ENCODE measurements at regions of chr4 and their contacts with region 1.

Region 1: DNA sequence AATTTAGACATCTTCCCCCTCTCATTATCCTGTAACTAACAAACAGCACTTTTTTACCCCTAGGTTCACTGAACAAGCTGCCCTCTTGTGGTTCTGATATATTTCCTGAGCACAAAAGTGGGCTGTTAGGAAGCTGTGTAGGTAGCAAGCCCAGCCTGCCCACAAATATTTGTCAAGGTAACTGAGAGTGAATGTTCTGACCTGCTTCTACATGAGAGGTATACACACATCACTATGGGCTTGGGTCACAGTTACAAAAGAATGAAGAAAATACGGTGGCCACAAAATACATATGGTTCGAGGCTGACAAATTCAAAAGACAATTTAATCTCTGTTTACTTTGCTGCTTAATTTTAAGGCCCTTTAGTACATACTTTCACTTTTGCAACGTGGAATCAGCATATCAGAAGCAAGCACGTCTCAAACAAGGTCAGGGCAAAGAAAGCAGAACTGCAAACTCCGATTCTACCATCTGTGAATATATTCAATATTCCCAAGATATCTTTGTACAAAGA is 78.7 kb downstream of the RBM47 start:
- DNase-seq: peak; percentile 37
- H3K4me3 Mint-ChIP-seq: peak overlapping the region; percentile 84
- H3K27ac Mint-ChIP-seq: peak overlapping the region; percentile 81
- H3K4me1 Mint-ChIP-seq: peaks cover 65% of the 10 kb centered on the region
- H3K27me3 Mint-ChIP-seq: no peaks in the 10 kb centered on the region

Region 2: GRCh38 chr4:40432504-40432903 is 118.5 kb before region 1 on chr4:
- intact Hi-C with region 1: loop called (anchors 2 kb)
- DNase-seq: no peak
- H3K4me3 Mint-ChIP-seq: no peak overlapping the region
- H3K27ac Mint-ChIP-seq: peak overlapping the region; percentile 50
- H3K4me1 Mint-ChIP-seq: peaks cover 34% of the 10 kb centered on the region
- H3K27me3 Mint-ChIP-seq: peaks cover 2% of the 10 kb centered on the region

Region 3: GRCh38 chr4:40576631-40577480 is 25.9 kb after region 1 on chr4:
- intact Hi-C with region 1: loop called (anchors 2 kb)
- DNase-seq: no peak
- H3K4me3 Mint-ChIP-seq: peak overlapping the region; percentile 35
- H3K27ac Mint-ChIP-seq: peak overlapping the region; percentile 74
- H3K4me1 Mint-ChIP-seq: peaks cover 57% of the 10 kb centered on the region
- H3K27me3 Mint-ChIP-seq: peaks cover 2% of the 10 kb centered on the region

Measured in activated T-helper 1 cell treated with anti-CD3 and anti-CD28 coated beads, Interleukin-12 subunit alpha, Interleukin-12 subunit beta, Interleukin-2, Interleukin-4 antibody, amounts not matched to agents 30 ng/mL and 10 ng/mL and 1 ng/mL, durations not matched to agents 14 hours and 24 hours and 36 hours (primary cell).